Posterior cingulate gyrus (tissue), 11 donors: ENCODE measurements at regions of chr15 and their contacts with region 1.

Region 1: DNA sequence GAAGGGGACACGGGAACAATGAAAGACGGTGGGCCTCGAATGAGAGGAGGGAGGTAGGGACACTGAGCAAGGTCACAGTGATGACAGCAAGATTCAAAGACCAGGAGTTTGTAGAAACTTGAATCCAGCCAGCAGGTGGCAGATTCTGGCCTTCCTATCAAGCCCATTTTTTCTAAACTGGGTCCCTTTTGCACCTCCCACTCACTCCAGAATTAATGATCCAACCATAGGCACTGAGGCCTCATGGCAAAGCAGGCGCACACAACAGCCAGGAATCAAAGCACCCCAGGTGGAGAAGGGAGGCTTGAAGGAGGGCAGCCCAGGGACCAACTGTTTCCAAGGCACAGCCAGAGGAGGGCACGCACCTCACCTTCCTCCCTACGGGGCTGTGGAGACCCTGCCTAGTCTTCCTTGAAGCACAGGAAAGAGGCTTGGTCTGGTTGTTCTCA is 90.2 kb downstream of the ANP32A start:
- DNase-seq: peak in 8 of 10 donors; percentile 29 to 85 (median 62)

Region 2: DNA sequence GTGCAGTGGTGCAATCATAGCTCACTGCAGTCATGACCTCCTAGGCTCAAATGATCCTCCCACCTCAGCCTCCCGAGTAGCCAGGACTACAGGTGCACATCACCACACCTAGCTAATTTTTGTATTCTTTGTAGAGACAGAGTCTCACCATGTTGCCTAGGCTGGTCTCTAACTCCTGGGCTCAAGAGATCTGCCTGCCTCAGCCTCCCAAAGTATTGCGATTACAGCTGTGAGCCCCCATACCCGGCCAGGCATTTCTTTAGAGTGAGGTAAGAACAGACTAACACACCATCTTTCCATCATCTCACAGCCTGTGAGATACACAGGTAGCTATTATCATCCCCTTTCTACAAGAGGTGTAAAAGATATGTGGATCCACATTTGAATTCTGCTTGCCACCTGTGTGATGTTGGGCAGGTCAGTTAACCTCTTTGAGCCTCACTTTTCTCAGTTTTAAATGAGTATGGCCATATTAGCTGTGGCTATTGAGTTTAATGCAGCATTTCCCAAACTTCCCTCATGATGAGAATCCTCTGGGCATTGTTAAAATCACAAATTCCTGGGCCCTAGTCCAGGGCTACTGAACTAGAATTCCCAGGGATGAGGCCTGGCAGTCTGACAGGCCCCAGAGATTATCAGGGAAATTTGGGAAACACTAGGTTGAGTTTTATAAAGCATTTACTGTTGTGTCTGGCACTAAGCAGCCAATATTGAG is 44.2 kb after region 1 on chr15:
- intact Hi-C with region 1: loop called (anchors 5 kb)
- DNase-seq: no peak

Region 3: GRCh38 chr15:68852461-68852860 is 122.0 kb after region 1 on chr15:
- intact Hi-C with region 1: no loop called
- DNase-seq: no peak

Region 4: GRCh38 chr15:69224383-69224782 is 493.9 kb after region 1 on chr15:
- intact Hi-C with region 1: no loop called
- DNase-seq: no peak